CD4-positive, alpha-beta T cell (primary cell): ENCODE measurements at regions of chr9 and their contacts with region 1.

Region 1: GRCh38 chr9:34403554-34404380 is 27.1 kb upstream of the MYORG start:
- DNase-seq: peak; percentile 27 to 72 (median 44)
- ATAC-seq: peak; percentile 48
- H3K4me3 ChIP-seq: no peak overlapping the region
- H3K4me3 Mint-ChIP-seq: no peak overlapping the region
- H3K27ac ChIP-seq: no peak overlapping the region
- H3K27ac Mint-ChIP-seq: no peak overlapping the region
- H3K4me1 ChIP-seq: no peaks in the 10 kb centered on the region
- H3K4me1 Mint-ChIP-seq: no peaks in the 10 kb centered on the region
- H3K27me3 ChIP-seq: no peaks in the 10 kb centered on the region
- H3K27me3 Mint-ChIP-seq: no peaks in the 10 kb centered on the region
- CTCF ChIP-seq: peak; percentile 99

Region 2: DNA sequence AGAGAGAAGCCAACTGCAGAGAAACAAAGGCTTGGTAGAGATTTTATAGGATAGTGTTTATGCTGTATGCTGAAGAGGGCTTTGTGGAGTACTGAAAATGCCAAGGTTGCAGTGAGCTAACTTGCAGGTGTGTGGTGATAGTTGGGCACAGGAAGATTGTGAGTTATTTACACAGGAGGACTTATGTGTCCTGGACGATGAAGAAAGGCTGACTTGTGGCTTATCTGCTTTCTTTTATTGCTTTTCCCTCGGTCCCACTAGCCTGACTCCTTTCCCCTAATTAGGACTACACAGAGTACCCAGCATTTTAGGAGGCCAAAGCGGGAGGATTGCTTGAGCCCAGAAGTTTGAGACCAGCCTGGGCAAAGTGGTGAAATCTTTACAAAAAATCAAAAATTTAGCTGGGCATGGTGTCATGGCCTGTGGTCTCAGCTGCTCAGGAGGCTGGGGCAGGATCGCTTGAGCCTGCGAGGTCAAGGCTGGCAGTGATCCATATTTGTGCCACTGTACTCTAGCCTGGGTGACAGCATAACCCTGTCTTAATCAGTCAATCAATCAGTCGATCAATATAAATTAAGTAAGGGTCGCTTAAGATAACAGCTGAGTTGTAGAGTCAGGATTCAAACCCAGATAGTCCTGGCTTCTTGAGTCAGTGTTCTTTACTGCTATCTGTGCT is 524.9 kb before region 1 on chr9:
- CTCF ChIA-PET with region 1: no interaction called
- POLR2A ChIA-PET with region 1: no interaction called
- intact Hi-C with region 1: no loop called
- DNase-seq: no peak
- ATAC-seq: no peak
- H3K4me3 ChIP-seq: no peak overlapping the region
- H3K4me3 Mint-ChIP-seq: no peak overlapping the region
- H3K27ac ChIP-seq: no peak overlapping the region
- H3K27ac Mint-ChIP-seq: peak overlapping the region; percentile 25
- H3K4me1 ChIP-seq: peaks cover 16% of the 10 kb centered on the region
- H3K4me1 Mint-ChIP-seq: peaks cover 51% of the 10 kb centered on the region
- H3K27me3 ChIP-seq: no peaks in the 10 kb centered on the region
- H3K27me3 Mint-ChIP-seq: no peaks in the 10 kb centered on the region
- CTCF ChIP-seq: no peak

Region 3: GRCh38 chr9:34271265-34272006 is 132.3 kb before region 1 on chr9:
- CTCF ChIA-PET with region 1: no interaction called
- POLR2A ChIA-PET with region 1: no interaction called
- intact Hi-C with region 1: no loop called
- DNase-seq: no peak
- ATAC-seq: no peak
- H3K4me3 ChIP-seq: no peak overlapping the region
- H3K4me3 Mint-ChIP-seq: no peak overlapping the region
- H3K27ac ChIP-seq: no peak overlapping the region
- H3K27ac Mint-ChIP-seq: no peak overlapping the region
- H3K4me1 ChIP-seq: no peaks in the 10 kb centered on the region
- H3K4me1 Mint-ChIP-seq: no peaks in the 10 kb centered on the region
- H3K27me3 ChIP-seq: no peaks in the 10 kb centered on the region
- H3K27me3 Mint-ChIP-seq: no peaks in the 10 kb centered on the region
- CTCF ChIP-seq: no peak

Region 4: DNA sequence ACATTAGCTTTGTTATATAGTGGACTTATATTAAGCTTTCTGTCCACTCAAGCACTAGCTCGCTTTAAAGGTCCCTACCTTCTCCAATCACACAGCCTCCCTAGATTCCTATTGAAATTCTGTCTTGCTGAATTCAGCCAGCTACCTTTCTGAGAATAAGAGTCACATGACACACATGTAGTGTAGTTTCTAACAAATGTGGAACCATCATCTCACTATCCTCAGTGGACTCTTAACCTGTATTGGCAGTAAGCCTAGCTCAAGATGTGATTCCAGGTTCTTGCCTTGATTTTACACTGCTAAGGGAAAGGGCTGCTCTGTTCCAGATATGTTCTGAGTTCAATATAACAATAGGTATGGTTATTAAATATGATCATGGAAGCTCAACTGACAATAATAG is 43.2 kb after region 1 on chr9:
- CTCF ChIA-PET with region 1: no interaction called
- POLR2A ChIA-PET with region 1: no interaction called
- intact Hi-C with region 1: loop called in 1 of 2 experiments (anchors 1 kb)
- DNase-seq: no peak
- ATAC-seq: no peak
- H3K4me3 ChIP-seq: no peak overlapping the region
- H3K4me3 Mint-ChIP-seq: no peak overlapping the region
- H3K27ac ChIP-seq: no peak overlapping the region
- H3K27ac Mint-ChIP-seq: no peak overlapping the region
- H3K4me1 ChIP-seq: no peaks in the 10 kb centered on the region
- H3K4me1 Mint-ChIP-seq: peaks cover 9% of the 10 kb centered on the region
- H3K27me3 ChIP-seq: no peaks in the 10 kb centered on the region
- H3K27me3 Mint-ChIP-seq: no peaks in the 10 kb centered on the region
- CTCF ChIP-seq: no peak

Region 5: GRCh38 chr9:34500623-34501267 is 97.0 kb after region 1 on chr9:
- CTCF ChIA-PET with region 1: interaction called, 5 read pairs
- POLR2A ChIA-PET with region 1: no interaction called
- intact Hi-C with region 1: loop called in 1 of 2 experiments (anchors 1 kb)
- DNase-seq: peak; percentile 47 to 81 (median 66)
- ATAC-seq: peak; percentile 94
- H3K4me3 ChIP-seq: no peak overlapping the region
- H3K4me3 Mint-ChIP-seq: no peak overlapping the region
- H3K27ac ChIP-seq: no peak overlapping the region
- H3K27ac Mint-ChIP-seq: no peak overlapping the region
- H3K4me1 ChIP-seq: peaks cover 3% of the 10 kb centered on the region
- H3K4me1 Mint-ChIP-seq: no peaks in the 10 kb centered on the region
- H3K27me3 ChIP-seq: no peaks in the 10 kb centered on the region
- H3K27me3 Mint-ChIP-seq: peaks cover 10% of the 10 kb centered on the region
- CTCF ChIP-seq: peak; percentile 97

Region 6: GRCh38 chr9:34591248-34591916 is 187.6 kb after region 1 on chr9:
- CTCF ChIA-PET with region 1: interaction called, 11 read pairs
- POLR2A ChIA-PET with region 1: interaction called, 4 read pairs
- intact Hi-C with region 1: loop called (anchors 1 kb)
- DNase-seq: peak; percentile 51 to 87 (median 72)
- ATAC-seq: peak; percentile 76
- H3K4me3 ChIP-seq: peak overlapping the region; percentile 63
- H3K4me3 Mint-ChIP-seq: peak overlapping the region; percentile 80
- H3K27ac ChIP-seq: no peak overlapping the region
- H3K27ac Mint-ChIP-seq: no peak overlapping the region
- H3K4me1 ChIP-seq: peaks cover 30% of the 10 kb centered on the region
- H3K4me1 Mint-ChIP-seq: peaks cover 26% of the 10 kb centered on the region
- H3K27me3 ChIP-seq: peaks cover 69 to 75% of the 10 kb centered on the region in 2 experiments
- H3K27me3 Mint-ChIP-seq: peaks cover 83% of the 10 kb centered on the region
- CTCF ChIP-seq: peak; percentile 89